Mammary epithelial cell (primary cell): ENCODE measurements at regions of chr9 and their contacts with region 1.

Region 1: DNA sequence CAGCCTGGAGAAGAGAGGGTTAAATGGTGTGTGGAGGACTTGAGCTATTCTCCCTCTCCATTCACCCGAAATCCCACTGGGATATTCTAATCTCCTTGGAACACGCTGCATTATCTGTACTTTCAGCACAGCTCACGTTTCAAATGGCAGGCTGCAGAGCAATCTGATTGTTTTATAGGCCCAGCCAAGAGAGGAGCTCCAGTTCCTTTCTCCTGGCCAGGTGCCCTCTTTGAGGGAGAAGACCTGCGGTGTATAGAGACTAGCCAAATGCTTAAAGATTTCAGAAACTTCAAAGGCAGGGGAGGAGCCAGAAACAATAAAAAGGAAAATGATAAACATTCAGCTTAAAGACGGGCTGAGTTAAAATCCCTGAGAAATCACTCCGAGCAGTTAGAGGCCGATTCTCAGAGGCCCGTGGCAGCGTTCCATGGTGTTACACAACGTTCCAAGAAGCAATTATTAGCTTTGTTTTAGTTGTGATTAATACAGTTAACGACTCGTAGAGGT is 564.0 kb upstream of the KLF4 start:
- DNase-seq: peak; percentile 76
- H3K4me3 ChIP-seq: no peak overlapping the region
- H3K27ac ChIP-seq: peak overlapping the region; percentile 79
- H3K4me1 ChIP-seq: peaks cover 76% of the 10 kb centered on the region
- H3K27me3 ChIP-seq: no peaks in the 10 kb centered on the region
- CTCF ChIP-seq: no peak

Region 2: DNA sequence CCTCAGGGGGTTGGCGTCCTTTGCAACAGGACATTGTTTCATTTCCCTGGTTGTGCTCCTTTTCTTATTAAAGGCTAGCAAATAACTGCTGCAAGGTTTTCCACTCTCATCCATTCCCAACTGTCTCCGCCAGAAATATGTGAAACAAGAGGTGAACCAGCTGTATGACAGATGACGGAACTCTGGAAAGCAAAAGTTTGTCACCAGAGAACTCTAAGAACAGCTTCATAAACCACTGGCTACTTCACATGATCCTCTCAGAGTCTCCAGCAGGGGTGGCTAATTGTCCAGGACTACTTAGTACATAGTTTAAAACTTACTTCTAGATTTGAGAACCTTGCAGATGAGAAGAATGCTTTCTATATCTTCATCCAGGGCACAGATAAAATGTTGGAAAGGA is 966.4 kb before region 1 on chr9:
- CTCF ChIA-PET with region 1: no interaction called
- dilution Hi-C with region 1: no loop called
- in situ Hi-C with region 1: no loop called
- intact Hi-C with region 1: no loop called
- DNase-seq: no peak
- H3K4me3 ChIP-seq: no peak overlapping the region
- H3K27ac ChIP-seq: no peak overlapping the region
- H3K4me1 ChIP-seq: no peaks in the 10 kb centered on the region
- H3K27me3 ChIP-seq: peaks cover 5% of the 10 kb centered on the region
- CTCF ChIP-seq: peak in 1 of 2 donors; percentile 27

Region 3: DNA sequence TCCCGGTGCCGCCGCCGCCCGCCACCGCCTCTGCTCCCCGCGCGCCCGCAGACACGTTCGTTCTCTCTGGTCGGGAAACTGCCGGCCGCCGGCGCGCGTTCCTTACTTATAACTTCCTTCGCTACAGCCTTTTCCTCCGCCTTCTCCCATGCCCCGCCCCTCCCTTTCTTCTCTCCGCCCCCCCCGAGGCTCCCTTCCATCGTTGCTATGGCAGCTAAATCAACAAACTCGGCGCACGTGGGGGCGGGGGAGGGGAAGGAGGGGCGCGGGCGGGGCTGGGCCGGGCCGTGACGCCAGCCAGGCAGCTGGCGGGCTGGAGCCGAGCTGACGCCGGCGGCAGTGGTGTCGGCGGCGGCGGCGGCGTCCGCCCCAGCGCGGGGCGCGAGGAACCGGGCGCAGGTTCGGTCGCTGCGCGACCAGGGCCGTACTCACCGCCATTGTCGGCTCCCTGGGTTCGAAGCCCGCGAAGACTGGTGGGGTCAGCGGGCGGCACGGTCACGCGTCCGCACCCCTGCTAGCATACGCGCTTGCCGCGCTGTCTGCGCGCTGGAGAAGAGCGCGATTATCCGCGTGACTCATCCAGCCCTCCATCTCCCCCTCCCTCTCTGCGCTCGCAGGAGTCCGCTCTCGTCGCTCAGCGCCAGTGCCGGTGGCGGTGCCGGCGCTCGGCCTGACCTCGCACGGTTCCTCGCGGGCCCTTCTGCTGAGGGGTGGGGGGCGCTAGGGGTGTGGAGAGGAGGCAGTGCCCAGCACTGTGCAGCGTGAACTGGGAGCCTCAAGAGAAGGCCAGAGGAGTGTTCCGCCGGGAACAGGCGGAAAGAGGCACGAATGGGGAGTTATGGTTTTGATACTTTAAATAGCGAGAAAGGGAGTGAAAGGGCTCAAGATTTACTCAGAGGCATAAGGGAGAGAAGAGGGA is 563.7 kb before region 1 on chr9 and contains the start of gene KLF4:
- CTCF ChIA-PET with region 1: no interaction called
- dilution Hi-C with region 1: no loop called
- in situ Hi-C with region 1: loop called (anchors 10 to 25 kb)
- intact Hi-C with region 1: loop called (anchors 1 kb)
- DNase-seq: peak; percentile 91
- H3K4me3 ChIP-seq: peak within 1 kb of the TSS; percentile 93 to 97 (median 94)
- H3K27ac ChIP-seq: peak within 1 kb of the TSS; percentile 83
- H3K4me1 ChIP-seq: peaks cover 39% of the 10 kb centered on the region
- H3K27me3 ChIP-seq: no peaks in the 10 kb centered on the region
- CTCF ChIP-seq: no peak
- total RNA-seq, gene KLF4: 20.5 to 52.5 TPM

Region 4: GRCh38 chr9:107711540-107711939 is 342.1 kb before region 1 on chr9:
- CTCF ChIA-PET with region 1: no interaction called
- dilution Hi-C with region 1: no loop called
- in situ Hi-C with region 1: no loop called
- intact Hi-C with region 1: loop called (anchors 2 kb)
- DNase-seq: peak; percentile 88
- H3K4me3 ChIP-seq: no peak overlapping the region
- H3K27ac ChIP-seq: peak overlapping the region; percentile 75
- H3K4me1 ChIP-seq: peaks cover 53% of the 10 kb centered on the region
- H3K27me3 ChIP-seq: no peaks in the 10 kb centered on the region
- CTCF ChIP-seq: no peak

Region 5: GRCh38 chr9:108002371-108002956 is 51.1 kb before region 1 on chr9:
- CTCF ChIA-PET with region 1: no interaction called
- dilution Hi-C with region 1: no loop called
- in situ Hi-C with region 1: no loop called
- intact Hi-C with region 1: loop called (anchors 5 kb)
- DNase-seq: no peak
- H3K4me3 ChIP-seq: no peak overlapping the region
- H3K27ac ChIP-seq: no peak overlapping the region
- H3K4me1 ChIP-seq: peaks cover 15% of the 10 kb centered on the region
- H3K27me3 ChIP-seq: no peaks in the 10 kb centered on the region
- CTCF ChIP-seq: no peak

Region 6: DNA sequence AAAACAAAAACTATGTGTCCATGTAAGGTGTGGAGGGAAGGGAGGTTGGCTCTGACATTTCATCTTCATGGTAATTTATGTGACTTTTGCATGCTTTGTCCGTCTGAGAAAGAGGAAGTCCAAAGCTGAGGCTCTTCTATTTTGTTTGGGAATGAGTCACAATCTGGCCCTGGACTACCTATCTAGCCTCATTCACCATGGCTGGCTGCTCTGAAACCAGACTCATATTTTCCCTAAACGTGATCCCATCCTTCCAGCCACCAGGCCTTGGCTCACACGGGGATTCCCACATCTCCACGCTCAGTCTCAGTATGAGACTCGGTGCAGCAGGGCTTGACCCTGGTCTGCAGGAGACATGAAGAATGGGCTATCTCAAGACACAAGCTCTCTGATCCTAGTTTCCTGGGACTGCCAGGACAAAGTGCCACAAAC is 129.4 kb after region 1 on chr9:
- CTCF ChIA-PET with region 1: no interaction called
- dilution Hi-C with region 1: no loop called
- in situ Hi-C with region 1: no loop called
- intact Hi-C with region 1: loop called (anchors 1 kb)
- DNase-seq: peak; percentile 56
- H3K4me3 ChIP-seq: no peak overlapping the region
- H3K27ac ChIP-seq: no peak overlapping the region
- H3K4me1 ChIP-seq: peaks cover 27% of the 10 kb centered on the region
- H3K27me3 ChIP-seq: no peaks in the 10 kb centered on the region
- CTCF ChIP-seq: no peak

Region 7: DNA sequence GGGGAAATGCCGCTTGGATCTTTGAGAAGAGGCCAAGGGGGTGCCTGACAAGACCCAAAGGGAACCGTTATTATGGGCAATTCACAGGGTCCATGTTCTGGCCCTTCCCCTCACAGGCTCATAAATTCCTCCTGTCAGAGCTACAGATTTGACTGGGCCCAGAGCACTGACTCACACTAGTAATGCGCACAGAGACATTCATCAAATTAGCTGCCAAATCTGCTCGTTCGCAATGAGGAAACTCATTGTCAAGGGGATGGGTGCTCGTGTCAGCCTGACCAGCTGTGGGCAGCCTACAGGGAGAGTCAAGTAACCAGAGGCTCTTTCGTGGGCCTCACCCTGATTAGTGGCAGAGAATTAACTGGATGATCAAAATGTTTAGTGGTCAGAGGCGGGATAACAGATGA is 424.8 kb after region 1 on chr9:
- CTCF ChIA-PET with region 1: no interaction called
- dilution Hi-C with region 1: no loop called
- in situ Hi-C with region 1: no loop called
- intact Hi-C with region 1: loop called (anchors 10 kb)
- DNase-seq: peak; percentile 94
- H3K4me3 ChIP-seq: no peak overlapping the region
- H3K27ac ChIP-seq: peak overlapping the region; percentile 95
- H3K4me1 ChIP-seq: peaks cover 48% of the 10 kb centered on the region
- H3K27me3 ChIP-seq: no peaks in the 10 kb centered on the region
- CTCF ChIP-seq: peak in 1 of 2 donors; percentile 23

Region 8: GRCh38 chr9:108634204-108634603 is 580.6 kb after region 1 on chr9:
- CTCF ChIA-PET with region 1: no interaction called
- dilution Hi-C with region 1: no loop called
- in situ Hi-C with region 1: no loop called
- intact Hi-C with region 1: loop called (anchors 10 kb)
- DNase-seq: peak; percentile 74
- H3K4me3 ChIP-seq: peak overlapping the region in 1 of 3 experiments; percentile 12
- H3K27ac ChIP-seq: peak overlapping the region; percentile 98
- H3K4me1 ChIP-seq: peaks cover 20% of the 10 kb centered on the region
- H3K27me3 ChIP-seq: no peaks in the 10 kb centered on the region
- CTCF ChIP-seq: no peak